ENCODE measurements at regions of chr17 and their contacts with region 1.

Region 1: GRCh38 chr17:80008383-80008840 is 27.3 kb downstream of the TBC1D16 start:
- DNase-seq: peak; percentile 70
- H3K4me3 Mint-ChIP-seq: no peak overlapping the region
- H3K27ac Mint-ChIP-seq: no peak overlapping the region
- H3K4me1 Mint-ChIP-seq: no peaks in the 10 kb centered on the region
- H3K27me3 Mint-ChIP-seq: peaks cover 1% of the 10 kb centered on the region

Region 2: DNA sequence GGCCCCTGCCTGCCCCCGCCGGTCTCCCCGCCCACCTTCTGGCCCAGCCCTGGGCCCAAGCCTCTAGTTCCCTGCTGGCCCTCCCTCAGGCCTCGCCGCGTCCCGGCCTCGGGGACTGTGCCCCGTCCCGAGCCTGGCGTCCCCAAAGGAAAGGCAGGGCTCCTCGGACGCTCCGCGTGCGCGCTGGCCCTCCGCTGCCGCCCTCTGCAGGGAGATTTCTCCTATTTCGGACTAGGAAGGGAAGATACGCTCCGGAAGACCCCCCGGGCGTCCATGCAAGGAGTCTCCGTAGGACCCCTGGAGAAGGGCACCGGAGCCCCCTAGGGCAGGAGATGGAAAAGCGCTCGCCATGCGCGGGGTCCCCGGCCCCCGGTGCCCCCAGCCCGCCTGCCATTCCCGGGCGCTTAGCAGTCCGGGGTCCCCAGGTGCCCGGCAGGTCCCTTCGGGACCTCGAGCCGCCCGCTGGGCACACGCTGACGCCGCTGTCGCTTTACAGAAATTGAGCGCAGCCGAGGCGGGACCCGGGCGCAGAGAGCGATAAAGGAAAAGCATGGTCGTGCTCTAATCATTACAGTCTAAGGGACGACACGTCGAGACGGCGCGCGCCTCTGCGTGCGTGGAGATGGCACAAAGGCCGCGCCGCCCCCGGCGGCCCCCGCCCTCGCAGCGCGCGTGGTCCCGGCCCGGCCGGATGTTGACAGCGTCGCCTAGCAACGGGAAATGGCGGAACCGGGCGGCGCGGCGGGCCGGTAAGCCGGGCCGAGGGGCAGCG is 27.7 kb after region 1 on chr17 and contains the start of gene CCDC40:
- intact Hi-C with region 1: loop called (anchors 1 kb)
- DNase-seq: peak; percentile 77
- H3K4me3 Mint-ChIP-seq: peak within 1 kb of the TSS; percentile 85
- H3K27ac Mint-ChIP-seq: peak within 1 kb of the TSS; percentile 91
- H3K4me1 Mint-ChIP-seq: peaks cover 5% of the 10 kb centered on the region
- H3K27me3 Mint-ChIP-seq: peaks cover 50% of the 10 kb centered on the region
- total RNA-seq, gene CCDC40: 0.15 and 0.16 TPM in 2 replicates